ENCODE measurements at regions of chr1 and their contacts with region 1.

Region 1: GRCh38 chr1:59296358-59297256 is at the start of gene FGGY:
- DNase-seq: peak; percentile 90 to 95 (median 92)
- ATAC-seq: peak; percentile 94
- H3K4me3 ChIP-seq: peak within 1 kb of the TSS; percentile 56
- H3K27ac ChIP-seq: peak within 1 kb of the TSS; percentile 86
- H3K4me1 ChIP-seq: peaks cover 9 to 28% of the 10 kb centered on the region in 2 experiments
- H3K27me3 ChIP-seq: no peaks in the 10 kb centered on the region
- CTCF ChIP-seq: 0 out of 6 replicates have a peak, but pooled peaks of 1 of the 3 experiments have one; percentile 2
- EP300 ChIP-seq: no peak
- POLR2A ChIP-seq: peak; percentile 91
- RAD21 ChIP-seq: peak; percentile 6 to 10; a peak in 2 of 4 replicates
- polyA plus RNA-seq, gene FGGY: 12.6 to 15.4 TPM

Region 2: GRCh38 chr1:59057211-59057694 is 239.4 kb before region 1 on chr1:
- CTCF ChIA-PET with region 1: no interaction called
- POLR2A ChIA-PET with region 1: no interaction called
- in situ Hi-C with region 1: no loop called
- intact Hi-C with region 1: loop called (anchors 10 kb)
- DNase-seq: no peak
- ATAC-seq: peak; percentile 63
- H3K4me3 ChIP-seq: no peak overlapping the region
- H3K27ac ChIP-seq: no peak overlapping the region
- H3K4me1 ChIP-seq: peaks cover 0 to 19% of the 10 kb centered on the region in 2 experiments; a peak in 4 of 5 replicates
- H3K27me3 ChIP-seq: peaks cover 0 to 11% of the 10 kb centered on the region in 2 experiments; a peak in 3 of 5 replicates
- CTCF ChIP-seq: no peak
- EP300 ChIP-seq: no peak
- POLR2A ChIP-seq: no peak
- RAD21 ChIP-seq: no peak

Region 3: GRCh38 chr1:59506952-59507351 is 210.3 kb after region 1 on chr1:
- CTCF ChIA-PET with region 1: no interaction called
- POLR2A ChIA-PET with region 1: no interaction called
- in situ Hi-C with region 1: no loop called
- intact Hi-C with region 1: loop called (anchors 5 kb)
- DNase-seq: peak in 2 of 4 experiments; percentile 23 to 34
- ATAC-seq: peak; percentile 74
- H3K4me3 ChIP-seq: no peak overlapping the region
- H3K27ac ChIP-seq: peak overlapping the region; percentile 52; the same call in 1 of the 3 replicates
- H3K4me1 ChIP-seq: peaks cover 0 to 34% of the 10 kb centered on the region in 2 experiments; a peak in 3 of 5 replicates
- H3K27me3 ChIP-seq: no peaks in the 10 kb centered on the region
- CTCF ChIP-seq: no peak
- EP300 ChIP-seq: no peak
- POLR2A ChIP-seq: no peak
- RAD21 ChIP-seq: no peak

Region 4: DNA sequence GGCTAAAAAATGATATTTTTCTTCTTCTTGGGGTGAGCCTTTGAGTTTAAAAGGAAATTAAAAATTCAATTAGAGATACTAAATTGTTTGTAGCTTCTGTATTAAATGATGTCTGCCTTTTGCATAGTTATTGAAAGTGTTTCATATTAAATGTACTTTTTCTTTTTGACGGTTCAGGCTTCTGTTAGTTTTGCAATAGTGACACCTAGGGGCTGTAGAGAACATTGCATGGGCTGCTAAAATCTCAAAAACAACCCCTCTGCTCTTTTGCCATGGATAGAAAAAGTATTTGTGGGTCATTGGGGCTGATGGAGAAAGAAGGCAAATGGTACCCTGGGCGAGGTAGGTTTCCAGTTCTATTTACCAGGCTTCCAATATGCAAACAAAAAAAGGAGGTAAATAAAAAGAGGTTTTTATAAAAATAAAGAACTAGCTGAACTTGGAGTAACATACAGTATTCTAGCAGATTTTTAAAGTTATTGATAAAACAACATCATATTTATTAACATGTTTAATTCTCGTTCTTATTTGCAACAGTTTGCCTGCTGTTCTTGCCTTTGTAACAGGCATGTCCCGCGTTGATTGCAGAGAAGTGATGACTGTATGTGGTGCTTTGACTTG is 402.7 kb after region 1 on chr1:
- CTCF ChIA-PET with region 1: no interaction called
- POLR2A ChIA-PET with region 1: no interaction called
- in situ Hi-C with region 1: no loop called
- intact Hi-C with region 1: loop called (anchors 10 kb)
- DNase-seq: peak; percentile 45 to 58 (median 50)
- ATAC-seq: 0 out of 3 replicates have a peak, but pooled peaks have one; percentile 42
- H3K4me3 ChIP-seq: no peak overlapping the region
- H3K27ac ChIP-seq: no peak overlapping the region
- H3K4me1 ChIP-seq: no peaks in the 10 kb centered on the region
- H3K27me3 ChIP-seq: no peaks in the 10 kb centered on the region; a peak in 2 of 5 replicates
- CTCF ChIP-seq: peak; percentile 49 to 87 (median 78); a peak in 5 of 6 replicates
- EP300 ChIP-seq: no peak
- POLR2A ChIP-seq: no peak
- RAD21 ChIP-seq: peak; percentile 90 to 91